ENCODE measurements at regions of chr9 and their contacts with region 1.

Region 1: GRCh38 chr9:130940693-130941576 is 1.9 kb upstream of the FIBCD1 start:
- DNase-seq: peak; percentile 50
- H3K4me3 ChIP-seq: no peak overlapping the region
- H3K27ac ChIP-seq: no peak overlapping the region
- H3K4me1 ChIP-seq: no peaks in the 10 kb centered on the region
- H3K27me3 ChIP-seq: peaks cover 47% of the 10 kb centered on the region
- CTCF ChIP-seq: peak; percentile 86

Region 2: DNA sequence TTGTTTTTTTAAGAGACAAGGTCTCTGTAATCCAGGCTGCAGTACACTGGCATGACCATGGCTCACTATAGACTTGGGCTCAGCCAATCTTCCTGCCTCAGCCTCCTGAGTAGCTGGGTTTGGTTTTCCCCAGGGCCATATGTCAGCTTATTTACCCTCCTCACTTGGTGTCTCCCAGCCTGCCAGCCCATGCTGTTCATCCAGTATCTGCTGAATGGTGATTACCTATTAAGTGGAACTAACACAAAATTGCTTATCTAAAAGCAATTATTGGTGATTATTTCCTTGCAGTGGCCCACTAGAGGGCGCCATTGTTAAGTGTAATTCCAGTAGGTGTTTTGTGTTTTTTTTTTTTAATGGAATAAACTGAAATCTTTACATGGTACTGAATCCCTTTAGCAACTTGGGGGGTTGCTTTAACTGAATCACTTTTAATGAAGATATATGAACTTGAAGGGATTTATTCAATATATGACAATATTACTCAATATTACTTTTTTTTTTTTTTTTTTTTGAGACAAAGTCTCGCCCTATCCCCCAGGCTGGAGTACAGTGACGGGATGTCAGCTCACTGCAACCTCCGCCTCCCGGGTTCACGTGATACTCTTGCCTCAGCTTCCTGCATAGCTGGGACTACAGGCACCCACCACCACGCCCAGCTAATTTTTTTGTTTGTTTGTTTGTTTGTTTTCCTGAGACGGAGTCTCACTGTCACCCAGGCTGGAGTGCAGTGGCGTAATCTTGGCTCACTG is 233.5 kb before region 1 on chr9:
- CTCF ChIA-PET with region 1: interaction called, 3 read pairs
- POLR2A ChIA-PET with region 1: no interaction called
- intact Hi-C with region 1: loop called (anchors 2 kb)
- DNase-seq: peak; percentile 68
- H3K4me3 ChIP-seq: no peak overlapping the region
- H3K27ac ChIP-seq: no peak overlapping the region
- H3K4me1 ChIP-seq: no peaks in the 10 kb centered on the region
- H3K27me3 ChIP-seq: no peaks in the 10 kb centered on the region
- CTCF ChIP-seq: peak; percentile 92

Region 3: DNA sequence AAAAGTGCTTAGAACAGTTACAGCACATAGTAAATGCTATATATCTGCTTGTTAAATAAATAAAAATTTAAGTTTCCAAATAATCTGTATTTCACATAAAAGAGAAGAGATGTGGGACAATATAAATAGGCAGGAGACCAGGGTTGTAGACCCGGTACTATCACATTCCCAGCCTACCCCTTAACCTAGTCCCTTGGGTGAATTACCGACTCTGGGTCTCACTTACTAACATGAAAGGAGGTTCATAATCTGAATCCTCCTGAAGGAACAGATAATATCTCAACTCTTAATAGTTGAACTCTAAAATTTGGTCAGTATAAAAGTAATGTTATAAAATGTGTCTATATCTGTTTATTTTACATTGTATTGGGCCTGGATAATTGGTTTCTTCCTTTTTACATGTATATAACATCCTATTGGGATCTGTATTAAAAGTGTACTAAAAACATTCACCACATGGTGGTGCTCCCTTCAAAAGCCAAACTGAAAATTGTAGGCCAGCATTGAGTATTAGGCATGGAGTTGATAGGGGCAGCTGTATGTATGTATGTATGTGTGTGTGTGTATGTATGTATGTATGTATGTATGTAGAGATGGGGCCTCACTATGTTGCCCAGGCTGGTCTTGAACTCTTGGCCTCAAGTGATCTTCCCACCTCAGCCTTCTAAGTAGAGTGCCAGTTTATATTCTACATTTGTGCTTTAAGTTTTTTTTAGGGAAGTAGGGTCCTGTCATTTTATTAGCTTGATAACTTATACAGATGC is 170.1 kb before region 1 on chr9:
- CTCF ChIA-PET with region 1: no interaction called
- POLR2A ChIA-PET with region 1: no interaction called
- intact Hi-C with region 1: loop called (anchors 5 kb)
- DNase-seq: peak; percentile 84
- H3K4me3 ChIP-seq: no peak overlapping the region
- H3K27ac ChIP-seq: no peak overlapping the region
- H3K4me1 ChIP-seq: no peaks in the 10 kb centered on the region
- H3K27me3 ChIP-seq: no peaks in the 10 kb centered on the region
- CTCF ChIP-seq: peak; percentile 73

Region 4: DNA sequence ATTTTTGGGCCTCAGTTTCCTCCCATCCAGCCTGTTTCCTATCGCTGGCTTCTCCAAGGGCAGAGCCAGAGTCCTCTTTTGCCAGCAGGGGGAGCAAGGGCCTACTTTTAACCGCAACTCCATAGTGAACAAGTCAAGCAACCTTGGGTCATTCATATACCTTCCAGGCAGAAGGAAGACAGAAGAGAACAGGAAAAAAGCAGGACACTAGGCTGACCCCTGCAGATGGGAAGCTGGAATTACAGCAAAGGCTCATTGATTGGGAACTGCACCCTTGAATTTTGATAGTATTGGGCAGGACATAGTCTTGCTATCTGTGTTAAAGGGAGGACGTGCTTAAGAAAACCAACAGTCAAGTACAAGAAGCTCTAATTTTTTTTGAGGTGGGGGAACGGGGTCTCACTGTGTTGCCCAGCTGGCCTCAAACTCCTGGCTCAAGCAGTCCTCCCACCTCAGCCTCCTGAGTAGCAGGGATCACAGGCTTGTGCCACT is 74.4 kb before region 1 on chr9:
- CTCF ChIA-PET with region 1: interaction called, 3 read pairs
- POLR2A ChIA-PET with region 1: interaction called, 12 read pairs
- intact Hi-C with region 1: loop called (anchors 2 kb)
- DNase-seq: peak; percentile 91
- H3K4me3 ChIP-seq: no peak overlapping the region
- H3K27ac ChIP-seq: no peak overlapping the region
- H3K4me1 ChIP-seq: peaks cover 23% of the 10 kb centered on the region
- H3K27me3 ChIP-seq: no peaks in the 10 kb centered on the region
- CTCF ChIP-seq: peak; percentile 98

Region 5: GRCh38 chr9:131019388-131020239 is 78.7 kb after region 1 on chr9:
- CTCF ChIA-PET with region 1: no interaction called
- POLR2A ChIA-PET with region 1: interaction called, 10 read pairs
- intact Hi-C with region 1: no loop called
- DNase-seq: peak; percentile 50
- H3K4me3 ChIP-seq: no peak overlapping the region
- H3K27ac ChIP-seq: no peak overlapping the region
- H3K4me1 ChIP-seq: no peaks in the 10 kb centered on the region
- H3K27me3 ChIP-seq: peaks cover 12% of the 10 kb centered on the region
- CTCF ChIP-seq: no peak

Region 6: DNA sequence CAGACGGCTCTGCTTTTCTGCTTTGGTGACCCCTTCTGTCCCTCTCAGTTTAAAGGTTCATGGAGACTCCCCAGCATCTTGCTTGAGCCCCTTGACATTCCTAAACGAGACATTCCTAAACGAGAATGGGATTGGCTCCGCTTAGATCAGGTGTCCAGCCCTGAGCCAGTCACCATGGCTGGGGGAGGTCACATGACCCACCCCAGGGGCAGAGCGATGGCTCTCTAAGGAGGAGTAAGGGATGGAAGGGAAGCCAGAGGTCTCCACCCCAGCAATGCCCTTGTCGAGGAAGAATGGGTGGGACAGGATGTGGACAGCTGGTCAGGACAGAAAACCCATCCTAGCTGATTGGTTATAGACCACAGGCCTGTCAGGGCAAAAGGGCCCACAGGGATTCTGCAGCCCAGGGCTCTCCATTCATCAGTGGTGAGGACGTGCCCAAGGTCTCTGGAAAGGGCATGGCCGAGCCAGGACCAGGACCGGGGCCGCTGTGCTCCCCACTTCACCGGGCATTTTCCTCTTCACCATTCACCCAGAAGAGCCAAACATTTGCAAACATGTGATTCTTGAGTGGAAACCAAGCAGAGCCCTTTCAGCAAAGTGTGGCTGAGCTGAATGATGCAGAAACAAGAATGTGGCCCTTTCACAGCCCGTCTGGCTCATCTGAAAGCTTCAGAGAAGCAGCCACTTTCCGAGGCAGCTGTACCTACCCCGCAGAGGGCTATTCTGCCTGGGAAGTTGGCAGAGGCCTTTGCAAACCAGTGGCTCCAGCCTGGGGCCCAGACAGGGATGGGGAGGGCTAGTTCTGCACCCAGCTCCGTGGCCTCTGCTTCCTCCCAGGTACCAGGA is 135.6 kb after region 1 on chr9:
- CTCF ChIA-PET with region 1: interaction called, 13 read pairs
- POLR2A ChIA-PET with region 1: no interaction called
- intact Hi-C with region 1: no loop called
- DNase-seq: no peak
- H3K4me3 ChIP-seq: no peak overlapping the region
- H3K27ac ChIP-seq: no peak overlapping the region
- H3K4me1 ChIP-seq: no peaks in the 10 kb centered on the region
- H3K27me3 ChIP-seq: no peaks in the 10 kb centered on the region
- CTCF ChIP-seq: no peak

Measured in A673 (cell line).